ENCODE measurements at regions of chr9 and their contacts with region 1.

Region 1: GRCh38 chr9:34343090-34343489 is 13.7 kb downstream of the NUDT2 start:
- DNase-seq: no peak
- ATAC-seq: no peak
- H3K4me3 ChIP-seq: no peak overlapping the region
- H3K4me3 Mint-ChIP-seq: no peak overlapping the region
- H3K27ac ChIP-seq: no peak overlapping the region
- H3K27ac Mint-ChIP-seq: no peak overlapping the region
- H3K4me1 ChIP-seq: no peaks in the 10 kb centered on the region
- H3K4me1 Mint-ChIP-seq: peaks cover 0 to 5% (median 0%) of the 10 kb centered on the region in 3 donors
- H3K27me3 ChIP-seq: no peaks in the 10 kb centered on the region
- H3K27me3 Mint-ChIP-seq: no peaks in the 10 kb centered on the region

Region 2: DNA sequence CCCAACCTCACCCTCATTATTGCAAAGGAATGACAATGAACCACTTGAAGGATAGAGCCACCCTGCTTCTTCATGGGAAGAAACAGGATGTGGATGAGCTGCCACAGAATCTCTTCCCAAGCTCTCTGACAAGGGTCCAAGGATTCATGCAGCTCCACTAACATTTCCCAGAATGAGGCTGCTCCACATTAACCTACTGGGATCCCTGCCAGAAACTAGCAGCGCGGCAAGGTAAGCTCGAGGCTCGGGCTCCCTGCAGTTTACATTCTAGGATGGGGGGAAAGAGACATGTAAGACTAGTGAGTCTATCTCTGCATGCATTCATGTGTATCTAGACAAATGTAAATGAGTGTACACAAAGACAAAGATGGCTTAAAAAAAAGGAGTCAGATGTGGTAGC is 228.7 kb before region 1 on chr9:
- CTCF ChIA-PET with region 1: no interaction called
- POLR2A ChIA-PET with region 1: no interaction called
- DNase-seq: no peak
- ATAC-seq: no peak
- H3K4me3 ChIP-seq: no peak overlapping the region
- H3K4me3 Mint-ChIP-seq: no peak overlapping the region
- H3K27ac ChIP-seq: no peak overlapping the region
- H3K27ac Mint-ChIP-seq: no peak overlapping the region
- H3K4me1 ChIP-seq: no peaks in the 10 kb centered on the region
- H3K4me1 Mint-ChIP-seq: peaks cover 17 to 26% (median 22%) of the 10 kb centered on the region in 3 donors
- H3K27me3 ChIP-seq: no peaks in the 10 kb centered on the region
- H3K27me3 Mint-ChIP-seq: no peaks in the 10 kb centered on the region

Region 3: DNA sequence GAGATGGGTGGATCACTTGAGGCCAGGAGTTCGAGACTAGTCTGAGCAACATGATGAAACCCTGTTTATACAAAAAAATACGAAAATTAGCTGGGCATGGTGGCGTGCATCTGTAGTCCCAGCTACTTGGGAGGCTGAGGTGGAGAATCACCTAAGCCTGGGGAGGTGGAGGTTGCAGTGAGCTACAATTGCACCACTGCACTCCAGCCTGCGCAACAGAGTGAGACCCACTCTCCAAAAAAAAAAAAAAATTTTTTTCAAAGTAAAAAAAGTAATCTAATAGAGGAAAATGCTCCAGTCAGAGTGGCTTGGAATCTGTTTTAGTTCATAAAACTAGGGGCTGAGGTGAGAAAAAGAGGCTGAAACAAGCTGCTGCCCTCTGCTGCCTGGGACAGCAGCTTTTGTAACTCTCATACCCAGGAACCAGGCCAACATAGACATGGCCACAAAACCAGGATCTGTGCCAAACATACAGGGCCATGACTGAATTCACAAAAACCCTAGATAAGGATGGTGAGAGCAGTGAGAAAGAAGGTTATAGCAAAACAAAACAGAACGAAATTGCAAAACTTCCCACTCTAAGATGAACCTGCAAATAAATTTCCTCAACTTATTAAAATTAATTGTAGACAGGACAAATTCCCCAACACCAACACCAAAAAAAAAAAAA is 203.5 kb before region 1 on chr9:
- CTCF ChIA-PET with region 1: no interaction called
- POLR2A ChIA-PET with region 1: no interaction called
- DNase-seq: no peak
- ATAC-seq: no peak
- H3K4me3 ChIP-seq: no peak overlapping the region
- H3K4me3 Mint-ChIP-seq: no peak overlapping the region
- H3K27ac ChIP-seq: no peak overlapping the region
- H3K27ac Mint-ChIP-seq: peak overlapping the region; percentile 28 to 58
- H3K4me1 ChIP-seq: peaks cover 0 to 2% of the 10 kb centered on the region in 2 experiments
- H3K4me1 Mint-ChIP-seq: peaks cover 0 to 8% (median 6%) of the 10 kb centered on the region in 3 donors
- H3K27me3 ChIP-seq: no peaks in the 10 kb centered on the region
- H3K27me3 Mint-ChIP-seq: no peaks in the 10 kb centered on the region

Region 4: DNA sequence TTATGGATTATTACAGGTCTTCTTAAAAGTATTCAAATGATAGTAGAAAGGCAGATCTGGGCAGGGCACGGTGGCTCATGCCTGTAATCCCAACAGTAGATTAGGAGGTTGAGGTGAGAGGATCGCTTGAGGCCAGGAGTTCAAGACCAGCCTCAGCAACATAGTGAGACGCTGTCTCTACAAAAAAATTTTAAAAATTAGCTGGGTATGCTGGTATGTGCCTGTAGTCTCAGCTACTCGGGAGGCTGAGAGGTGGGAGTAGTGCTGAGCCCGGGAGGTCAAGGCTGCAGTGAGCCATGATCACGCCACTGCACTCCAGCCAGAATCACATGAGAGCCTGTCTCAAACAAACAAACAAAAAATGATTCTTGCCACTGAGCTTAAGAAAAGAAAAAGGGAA is 120.6 kb before region 1 on chr9:
- CTCF ChIA-PET with region 1: interaction called in 1 of 2 experiments, 7 read pairs
- POLR2A ChIA-PET with region 1: interaction called in 1 of 2 experiments, 10 read pairs
- DNase-seq: no peak
- ATAC-seq: no peak
- H3K4me3 ChIP-seq: no peak overlapping the region
- H3K4me3 Mint-ChIP-seq: no peak overlapping the region
- H3K27ac ChIP-seq: no peak overlapping the region
- H3K27ac Mint-ChIP-seq: peak overlapping the region in 1 of 2 donors; percentile 22
- H3K4me1 ChIP-seq: peaks cover 0 to 2% of the 10 kb centered on the region in 2 experiments
- H3K4me1 Mint-ChIP-seq: peaks cover 8 to 30% (median 24%) of the 10 kb centered on the region in 3 donors
- H3K27me3 ChIP-seq: no peaks in the 10 kb centered on the region
- H3K27me3 Mint-ChIP-seq: no peaks in the 10 kb centered on the region

Measured in T-cell (primary cell).